ENCODE measurements at regions of chr3 and their contacts with region 1.

Region 1: GRCh38 chr3:116757315-116757714 is 47.7 kb downstream of the TUSC7 start:
- DNase-seq: no peak
- ATAC-seq: no peak
- H3K4me3 ChIP-seq: no peak overlapping the region
- H3K27ac ChIP-seq: no peak overlapping the region
- H3K4me1 ChIP-seq: no peaks in the 10 kb centered on the region
- H3K27me3 ChIP-seq: no peaks in the 10 kb centered on the region
- CTCF ChIP-seq: no peak
- EP300 ChIP-seq: no peak
- POLR2A ChIP-seq: no peak
- RAD21 ChIP-seq: no peak

Region 2: GRCh38 chr3:115819785-115820384 is 937.4 kb before region 1 on chr3:
- CTCF ChIA-PET with region 1: interaction called, 4 read pairs
- POLR2A ChIA-PET with region 1: no interaction called
- RAD21 ChIA-PET with region 1: no interaction called
- SMC1A ChIA-PET with region 1: no interaction called
- in situ Hi-C with region 1: no loop called
- intact Hi-C with region 1: loop called (anchors 5 kb)
- DNase-seq: peak; percentile 45
- ATAC-seq: peak; percentile 96
- H3K4me3 ChIP-seq: no peak overlapping the region
- H3K27ac ChIP-seq: no peak overlapping the region
- H3K4me1 ChIP-seq: no peaks in the 10 kb centered on the region
- H3K27me3 ChIP-seq: no peaks in the 10 kb centered on the region
- CTCF ChIP-seq: peak; percentile 93 to 100 (median 99)
- EP300 ChIP-seq: no peak
- POLR2A ChIP-seq: no peak
- RAD21 ChIP-seq: peak; percentile 79

Region 3: GRCh38 chr3:115903843-115904242 is 853.5 kb before region 1 on chr3:
- CTCF ChIA-PET with region 1: no interaction called
- POLR2A ChIA-PET with region 1: no interaction called
- RAD21 ChIA-PET with region 1: no interaction called
- SMC1A ChIA-PET with region 1: no interaction called
- in situ Hi-C with region 1: no loop called
- intact Hi-C with region 1: loop called (anchors 10 kb)
- DNase-seq: no peak
- ATAC-seq: no peak
- H3K4me3 ChIP-seq: no peak overlapping the region
- H3K27ac ChIP-seq: no peak overlapping the region
- H3K4me1 ChIP-seq: no peaks in the 10 kb centered on the region
- H3K27me3 ChIP-seq: no peaks in the 10 kb centered on the region; a peak in 1 of 4 replicates
- CTCF ChIP-seq: no peak
- EP300 ChIP-seq: no peak
- POLR2A ChIP-seq: no peak
- RAD21 ChIP-seq: no peak

Region 4: DNA sequence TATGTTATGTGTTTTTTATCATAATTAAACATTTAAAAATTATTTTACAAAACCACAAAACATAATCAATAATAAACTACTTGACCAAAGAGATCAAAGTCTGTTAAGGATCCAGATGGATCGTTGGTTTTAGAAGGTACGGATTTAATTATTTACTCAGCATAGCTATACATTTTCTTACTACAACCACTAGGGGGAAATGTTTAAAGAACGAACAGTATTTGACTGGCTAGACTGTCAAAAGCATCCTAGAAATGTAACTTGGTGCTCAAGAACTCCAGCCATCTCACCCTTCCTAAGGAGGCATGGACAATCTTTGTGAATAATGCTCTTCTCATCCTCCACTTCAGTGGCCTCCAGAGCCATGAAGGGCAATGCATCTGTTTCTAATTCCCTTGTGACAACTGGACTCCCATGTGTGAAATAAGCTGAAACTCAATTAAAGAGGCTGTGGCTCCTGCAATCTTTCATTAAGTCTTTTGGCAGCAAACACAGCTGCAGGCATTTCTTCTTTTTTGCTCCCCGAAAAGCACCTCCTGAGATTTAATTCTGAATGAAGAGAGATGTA is 142.4 kb before region 1 on chr3:
- CTCF ChIA-PET with region 1: interaction called, 6 read pairs
- POLR2A ChIA-PET with region 1: no interaction called
- RAD21 ChIA-PET with region 1: interaction called, 5 read pairs
- SMC1A ChIA-PET with region 1: interaction called, 8 read pairs
- in situ Hi-C with region 1: no loop called
- intact Hi-C with region 1: loop called (anchors 2 kb)
- DNase-seq: no peak
- ATAC-seq: peak; percentile 75
- H3K4me3 ChIP-seq: no peak overlapping the region
- H3K27ac ChIP-seq: no peak overlapping the region
- H3K4me1 ChIP-seq: no peaks in the 10 kb centered on the region
- H3K27me3 ChIP-seq: no peaks in the 10 kb centered on the region
- CTCF ChIP-seq: peak in 2 of 3 experiments; percentile 39 to 40; a peak in 4 of 6 replicates
- EP300 ChIP-seq: no peak
- POLR2A ChIP-seq: no peak
- RAD21 ChIP-seq: no peak; the same call in 1 of the 2 replicates

Region 5: DNA sequence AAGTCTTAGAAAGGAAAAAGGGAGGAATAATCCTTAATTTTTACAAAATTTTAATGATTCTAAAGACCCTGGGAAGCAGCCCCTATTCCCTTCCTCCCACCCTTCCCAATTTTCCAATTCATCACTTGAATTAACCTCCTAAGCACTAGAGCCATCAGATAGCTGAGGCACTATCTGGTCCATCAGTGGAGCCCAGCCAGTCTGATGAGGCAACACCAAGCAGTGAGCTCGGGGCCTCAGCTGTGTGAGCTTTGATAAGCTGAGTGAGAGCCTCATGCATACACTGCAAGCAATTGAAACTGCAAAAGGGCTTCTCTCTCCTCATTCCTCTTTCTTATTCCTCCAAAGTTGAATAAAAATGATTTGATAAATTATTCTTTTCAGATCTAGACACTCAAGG is 15.8 kb before region 1 on chr3:
- CTCF ChIA-PET with region 1: no interaction called
- POLR2A ChIA-PET with region 1: no interaction called
- RAD21 ChIA-PET with region 1: no interaction called
- SMC1A ChIA-PET with region 1: no interaction called
- in situ Hi-C with region 1: no loop called
- intact Hi-C with region 1: no loop called
- DNase-seq: no peak
- ATAC-seq: no peak
- H3K4me3 ChIP-seq: no peak overlapping the region
- H3K27ac ChIP-seq: no peak overlapping the region
- H3K4me1 ChIP-seq: no peaks in the 10 kb centered on the region
- H3K27me3 ChIP-seq: no peaks in the 10 kb centered on the region
- CTCF ChIP-seq: no peak
- EP300 ChIP-seq: no peak
- POLR2A ChIP-seq: no peak
- RAD21 ChIP-seq: no peak